ENCODE measurements at regions of chr1 and their contacts with region 1.

Region 1: GRCh38 chr1:37486680-37487618 is 12.6 kb downstream of the ZC3H12A start:
- DNase-seq: peak; percentile 63 to 87 (median 81)
- H3K4me3 ChIP-seq: no peak overlapping the region
- H3K27ac ChIP-seq: peak overlapping the region in 1 of 2 donors; percentile 57
- H3K4me1 ChIP-seq: no peaks in the 10 kb centered on the region
- H3K27me3 ChIP-seq: no peaks in the 10 kb centered on the region
- CTCF ChIP-seq: peak; percentile 91 to 95 (median 92)
- EP300 ChIP-seq: no peak
- POLR2A ChIP-seq: no peak

Region 2: DNA sequence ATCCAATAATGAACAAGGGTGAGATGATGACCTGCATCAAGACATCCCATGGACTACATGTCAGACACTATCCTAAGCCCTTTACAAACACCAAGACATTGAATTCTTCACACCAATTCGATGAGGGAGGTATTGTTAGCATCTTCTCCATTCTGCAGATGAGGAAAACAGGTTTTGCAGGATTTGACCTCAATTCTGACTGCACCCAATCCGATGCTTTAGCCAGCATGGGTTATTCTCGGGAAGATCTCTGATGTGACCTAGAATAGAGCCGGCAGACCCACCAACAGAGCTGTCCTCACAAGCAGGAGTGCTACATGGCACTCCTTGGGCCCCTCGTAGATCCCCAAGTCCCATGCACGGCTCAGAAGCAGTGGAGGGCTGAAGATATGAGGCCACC is 29.5 kb before region 1 on chr1:
- intact Hi-C with region 1: loop called (anchors 1 to 2 kb)
- DNase-seq: no peak
- H3K4me3 ChIP-seq: no peak overlapping the region
- H3K27ac ChIP-seq: no peak overlapping the region
- H3K4me1 ChIP-seq: peaks cover 3% of the 10 kb centered on the region
- H3K27me3 ChIP-seq: no peaks in the 10 kb centered on the region
- CTCF ChIP-seq: no peak
- EP300 ChIP-seq: no peak
- POLR2A ChIP-seq: no peak

Region 3: DNA sequence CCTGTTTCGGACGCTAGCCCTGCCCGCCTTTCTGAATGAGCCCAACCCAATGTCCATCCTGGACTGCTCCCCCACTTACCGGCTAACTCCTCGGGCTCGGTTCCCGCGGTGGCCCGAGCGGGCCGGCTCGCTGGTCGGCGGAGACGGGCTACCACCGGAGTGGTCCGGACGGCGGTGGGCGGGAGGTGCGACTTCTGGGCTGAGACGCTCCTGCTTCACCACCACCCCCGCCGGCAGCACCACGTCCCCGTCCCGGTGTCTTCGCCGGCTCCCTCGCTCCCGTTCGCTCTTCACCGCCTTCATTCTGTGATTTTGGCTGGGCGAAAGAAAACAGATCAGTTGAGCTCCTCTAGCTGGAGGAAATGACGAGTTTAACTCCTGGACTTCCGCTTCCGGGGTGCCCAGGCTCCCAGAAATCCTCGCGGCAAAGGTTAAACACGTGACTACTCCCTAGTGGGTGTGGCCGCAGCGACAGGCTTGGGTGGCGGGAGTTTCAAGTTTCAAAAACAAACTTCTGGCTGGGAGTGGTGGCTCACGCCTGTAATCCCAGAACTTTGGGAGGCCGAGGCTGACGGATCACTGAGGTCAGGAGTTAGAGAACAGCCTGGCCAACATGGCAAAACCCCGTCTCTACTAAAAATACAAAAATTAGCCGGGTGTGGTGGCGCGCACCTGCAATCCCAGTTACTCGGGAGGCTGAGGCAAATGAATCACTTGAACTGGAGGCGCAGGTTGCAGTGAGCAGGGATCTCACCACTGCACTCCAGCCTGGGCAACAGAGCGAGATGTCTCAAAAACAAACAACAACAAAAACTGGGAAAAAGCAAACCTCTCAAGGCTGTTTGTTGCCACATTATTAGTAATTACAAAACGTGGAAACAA is 67.2 kb after region 1 on chr1 and contains the start of gene SNIP1:
- intact Hi-C with region 1: no loop called
- DNase-seq: peak; percentile 89 to 93 (median 89)
- H3K4me3 ChIP-seq: peak within 1 kb of the TSS; percentile 94
- H3K27ac ChIP-seq: peak within 1 kb of the TSS in 1 of 2 donors; percentile 52
- H3K4me1 ChIP-seq: peaks cover 8% of the 10 kb centered on the region
- H3K27me3 ChIP-seq: no peaks in the 10 kb centered on the region
- CTCF ChIP-seq: peak in 1 of 3 donors; percentile 8
- EP300 ChIP-seq: no peak
- POLR2A ChIP-seq: peak; percentile 76
- total RNA-seq, gene SNIP1: 8.3 to 21.4 (median 16.5) TPM

Region 4: DNA sequence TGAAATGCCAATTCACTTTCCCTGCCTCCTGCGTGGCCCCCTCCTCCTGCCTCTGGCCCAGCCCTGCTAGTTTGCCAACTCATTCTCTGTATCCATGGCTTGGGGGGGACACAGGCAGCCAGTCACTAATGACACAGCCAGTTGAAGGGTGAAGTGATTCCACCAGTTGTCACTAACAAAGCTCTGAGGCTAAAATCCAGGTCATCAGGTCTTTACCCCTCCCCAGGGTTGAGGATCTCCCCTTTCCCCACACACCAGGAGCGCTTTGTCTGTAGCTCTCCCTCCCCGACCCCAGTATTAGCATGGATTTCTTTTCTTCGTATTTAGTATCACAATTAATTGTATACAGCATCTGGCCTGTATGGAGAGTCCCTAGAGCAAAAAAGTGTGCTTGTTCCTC is 978.5 kb after region 1 on chr1:
- intact Hi-C with region 1: no loop called
- DNase-seq: no peak
- H3K4me3 ChIP-seq: no peak overlapping the region
- H3K27ac ChIP-seq: no peak overlapping the region
- H3K4me1 ChIP-seq: no peaks in the 10 kb centered on the region
- H3K27me3 ChIP-seq: no peaks in the 10 kb centered on the region
- CTCF ChIP-seq: no peak
- EP300 ChIP-seq: no peak
- POLR2A ChIP-seq: no peak

Measured in ovary (tissue), 10 donors.